Panc1 (cell line): ENCODE measurements at regions of chr1 and their contacts with region 1.

Region 1: DNA sequence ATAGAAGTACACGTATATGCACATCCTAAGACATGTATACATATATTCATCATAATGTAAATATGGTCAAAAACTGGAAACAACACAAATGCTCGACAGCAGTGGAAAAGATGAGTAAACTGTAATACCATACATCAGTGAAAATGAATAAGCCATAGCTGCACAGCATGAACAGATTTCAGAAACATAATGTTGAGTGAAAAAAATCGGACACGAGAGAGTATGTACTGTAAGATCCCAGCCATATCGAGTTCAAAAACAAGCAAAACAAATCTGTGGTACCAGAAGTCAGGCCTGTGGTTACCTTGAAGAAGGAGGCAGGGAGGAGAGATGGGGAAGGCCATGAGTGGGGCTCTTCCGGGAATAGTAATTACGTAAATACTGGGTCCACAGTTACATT is 90.4 kb downstream of the GLIS1 start:
- DNase-seq: no peak
- ATAC-seq: no peak
- H3K4me3 ChIP-seq: no peak overlapping the region
- H3K27ac ChIP-seq: no peak overlapping the region
- H3K4me1 ChIP-seq: no peaks in the 10 kb centered on the region
- H3K27me3 ChIP-seq: peaks cover 15% of the 10 kb centered on the region
- CTCF ChIP-seq: no peak

Region 2: GRCh38 chr1:53616927-53617326 is 31.6 kb before region 1 on chr1:
- CTCF ChIA-PET with region 1: no interaction called
- POLR2A ChIA-PET with region 1: no interaction called
- in situ Hi-C with region 1: no loop called
- intact Hi-C with region 1: no loop called
- DNase-seq: no peak
- ATAC-seq: 0 out of 2 replicates have a peak, but pooled peaks have one; percentile 68
- H3K4me3 ChIP-seq: no peak overlapping the region
- H3K27ac ChIP-seq: no peak overlapping the region
- H3K4me1 ChIP-seq: no peaks in the 10 kb centered on the region
- H3K27me3 ChIP-seq: no peaks in the 10 kb centered on the region
- CTCF ChIP-seq: no peak

Region 3: DNA sequence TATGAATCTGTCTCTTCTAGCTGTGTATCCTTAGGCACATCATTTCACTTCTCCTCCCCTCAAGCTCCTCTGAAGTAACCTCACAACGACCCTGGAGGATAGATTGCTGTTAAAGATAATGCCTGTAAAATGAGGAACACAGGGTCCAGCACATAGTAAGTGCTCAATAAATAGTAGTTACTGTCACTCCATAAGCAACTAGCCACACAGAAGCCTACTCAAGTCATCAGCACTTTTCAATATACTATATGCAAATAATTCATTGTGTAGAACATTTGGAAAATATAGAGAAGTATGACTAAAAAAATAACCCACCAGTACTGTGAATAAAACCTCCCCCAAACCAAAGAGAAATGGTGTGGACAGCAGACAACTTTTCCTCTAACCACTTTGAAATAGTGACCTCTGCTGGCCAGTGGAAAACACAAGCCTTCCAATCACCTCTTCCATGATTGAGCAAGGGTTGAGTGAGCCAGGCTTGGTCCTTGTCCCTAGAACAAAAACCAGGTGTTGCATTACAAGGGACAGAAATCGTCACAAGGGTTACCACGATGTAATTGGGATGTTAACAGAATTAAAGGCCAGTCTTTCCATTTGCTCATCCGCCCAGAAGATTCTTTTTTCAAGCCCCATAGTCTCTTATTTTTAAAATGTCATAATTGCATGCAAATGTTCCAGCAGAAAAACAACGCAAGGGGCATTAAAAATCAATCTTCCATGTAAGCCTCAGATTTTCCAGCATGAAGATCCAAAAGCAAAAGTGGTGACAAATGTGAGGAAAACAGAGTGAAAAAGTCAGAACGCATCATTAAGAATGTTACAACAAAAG is 106.2 kb after region 1 on chr1:
- CTCF ChIA-PET with region 1: interaction called, 11 read pairs
- POLR2A ChIA-PET with region 1: no interaction called
- in situ Hi-C with region 1: no loop called
- intact Hi-C with region 1: no loop called
- DNase-seq: no peak
- ATAC-seq: peak; percentile 83
- H3K4me3 ChIP-seq: no peak overlapping the region
- H3K27ac ChIP-seq: no peak overlapping the region
- H3K4me1 ChIP-seq: no peaks in the 10 kb centered on the region
- H3K27me3 ChIP-seq: 0 out of 2 replicates have a peak, but pooled peaks cover 3% of the 10 kb centered on the region
- CTCF ChIP-seq: peak; percentile 84

Region 4: DNA sequence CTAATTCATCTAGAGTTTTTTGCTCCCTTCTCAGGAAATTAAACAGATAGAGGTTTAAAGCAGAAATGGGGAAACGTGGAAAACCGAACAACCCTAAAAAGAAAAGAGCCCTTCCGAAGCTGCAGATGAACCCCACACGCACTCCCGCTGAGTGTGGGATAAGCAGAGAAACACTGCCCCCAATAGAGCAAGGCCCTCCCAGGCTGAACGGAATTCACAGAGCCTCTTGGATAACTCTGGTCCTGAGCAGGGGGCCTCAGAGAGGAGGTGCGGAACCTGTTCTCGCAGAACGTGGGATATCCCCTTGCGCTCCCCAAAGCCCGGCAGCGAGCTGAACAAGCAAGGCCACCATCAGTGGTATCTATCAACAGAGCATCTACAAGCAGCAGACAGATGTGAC is 712.8 kb after region 1 on chr1:
- CTCF ChIA-PET with region 1: no interaction called
- POLR2A ChIA-PET with region 1: no interaction called
- in situ Hi-C with region 1: no loop called
- intact Hi-C with region 1: no loop called
- DNase-seq: no peak
- ATAC-seq: no peak
- H3K4me3 ChIP-seq: no peak overlapping the region
- H3K27ac ChIP-seq: no peak overlapping the region
- H3K4me1 ChIP-seq: no peaks in the 10 kb centered on the region
- H3K27me3 ChIP-seq: no peaks in the 10 kb centered on the region
- CTCF ChIP-seq: no peak